ENCODE measurements at regions of chr18 and their contacts with region 1.

Region 1: GRCh38 chr18:40056079-40056692 is 1898.8 kb upstream of the PIK3C3 start:
- DNase-seq: no peak
- ATAC-seq: no peak
- H3K4me3 ChIP-seq: no peak overlapping the region
- H3K27ac ChIP-seq: no peak overlapping the region
- H3K4me1 ChIP-seq: no peaks in the 10 kb centered on the region
- H3K27me3 ChIP-seq: no peaks in the 10 kb centered on the region
- CTCF ChIP-seq: no peak
- EP300 ChIP-seq: no peak
- POLR2A ChIP-seq: no peak
- RAD21 ChIP-seq: no peak

Region 2: DNA sequence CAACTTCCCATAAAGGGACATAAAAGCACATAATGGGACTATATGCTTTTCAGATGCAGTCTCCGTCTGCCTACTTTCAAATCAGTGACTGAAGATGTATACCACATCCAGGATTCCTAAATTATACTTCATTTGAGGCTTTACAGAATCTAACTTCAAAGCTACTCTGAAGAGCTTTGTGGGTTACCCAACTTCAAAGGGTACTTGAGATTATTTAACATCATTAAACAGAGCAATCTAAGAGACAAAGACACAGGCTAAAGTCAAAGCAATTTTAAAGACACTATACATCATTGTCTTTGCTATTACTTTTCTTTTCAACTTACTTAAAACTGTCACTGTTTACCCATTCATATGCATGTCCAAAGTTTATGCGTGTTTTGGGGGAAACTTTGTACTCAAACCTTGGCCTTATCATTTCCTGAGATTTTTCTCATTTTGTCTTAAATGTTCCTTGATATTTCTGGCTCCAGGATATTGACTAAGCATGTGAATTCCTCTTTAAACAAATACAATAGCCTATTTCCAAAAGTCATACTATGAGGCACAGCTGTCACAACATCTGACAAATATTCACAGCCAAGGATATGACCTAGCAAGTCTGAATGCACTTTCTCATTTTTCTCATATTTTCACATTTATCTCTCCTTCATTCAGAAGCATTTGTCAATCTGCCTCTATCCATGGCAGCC is 86.2 kb before region 1 on chr18:
- CTCF ChIA-PET with region 1: no interaction called
- POLR2A ChIA-PET with region 1: no interaction called
- in situ Hi-C with region 1: no loop called
- intact Hi-C with region 1: loop called (anchors 10 kb)
- DNase-seq: no peak
- ATAC-seq: no peak
- H3K4me3 ChIP-seq: no peak overlapping the region
- H3K27ac ChIP-seq: no peak overlapping the region
- H3K4me1 ChIP-seq: no peaks in the 10 kb centered on the region
- H3K27me3 ChIP-seq: no peaks in the 10 kb centered on the region
- CTCF ChIP-seq: no peak
- EP300 ChIP-seq: no peak
- POLR2A ChIP-seq: no peak
- RAD21 ChIP-seq: no peak

Measured in K562 (cell line).